Endothelial cell of umbilical vein (primary cell): ENCODE measurements at regions of chr2 and their contacts with region 1.

Region 1: DNA sequence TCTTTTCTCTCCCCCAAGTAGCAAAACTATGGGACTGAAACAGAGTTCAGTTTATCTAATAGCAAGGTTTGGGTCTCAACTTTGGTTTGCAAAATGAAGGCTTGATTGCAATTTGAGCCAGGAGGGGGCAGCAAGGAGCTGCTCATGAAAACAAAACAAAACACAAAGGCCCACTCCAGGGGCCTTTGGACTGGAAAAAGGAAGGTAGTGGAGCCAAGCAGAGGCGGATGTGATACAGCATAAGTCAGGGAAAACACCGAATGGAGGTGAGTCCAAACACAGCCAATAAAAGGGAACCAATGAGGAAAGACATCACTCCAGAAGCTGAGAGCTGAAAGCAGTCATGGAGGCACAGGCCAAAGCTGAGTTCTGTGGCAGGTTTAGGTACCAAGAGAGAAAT is 799.7 kb upstream of the ACVR2A start:
- DNase-seq: peak; percentile 47
- H3K4me3 ChIP-seq: no peak overlapping the region
- H3K27ac ChIP-seq: no peak overlapping the region
- H3K4me1 ChIP-seq: no peaks in the 10 kb centered on the region
- H3K27me3 ChIP-seq: no peaks in the 10 kb centered on the region
- CTCF ChIP-seq: peak; percentile 62 to 69
- POLR2A ChIP-seq: no peak

Region 2: DNA sequence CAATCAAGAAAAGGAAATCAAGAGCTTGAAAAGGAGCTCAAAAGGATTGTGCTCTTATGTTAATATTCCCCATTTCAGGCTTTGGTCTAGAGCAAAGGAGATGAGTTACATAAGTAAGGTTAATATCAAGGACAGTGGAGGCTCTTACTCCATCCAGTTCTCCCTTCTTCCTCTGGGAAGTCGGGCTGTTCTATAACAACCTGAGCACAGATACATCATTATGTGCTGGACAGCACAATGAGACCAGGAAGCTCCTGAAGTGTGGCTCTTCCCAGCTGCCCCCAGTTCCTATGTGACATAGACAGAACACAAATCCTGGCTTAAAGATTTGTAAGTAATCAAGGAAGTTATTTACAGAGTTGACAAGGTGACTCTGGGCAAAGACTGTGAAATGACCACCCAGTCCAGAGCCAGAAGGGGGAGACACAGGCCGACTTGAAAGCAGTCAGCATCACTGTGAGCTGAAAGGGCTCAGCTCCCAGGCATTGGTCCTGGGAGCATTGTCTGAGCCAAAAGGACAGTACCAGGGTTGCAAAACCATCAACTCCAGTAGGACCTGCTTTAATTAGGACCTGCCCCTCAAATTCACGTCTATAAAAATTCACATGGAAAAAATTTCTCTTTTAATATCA is 117.9 kb before region 1 on chr2:
- CTCF ChIA-PET with region 1: interaction called, 17 read pairs
- POLR2A ChIA-PET with region 1: no interaction called
- dilution Hi-C with region 1: no loop called
- intact Hi-C with region 1: loop called (anchors 2 kb)
- DNase-seq: peak; percentile 59
- H3K4me3 ChIP-seq: no peak overlapping the region
- H3K27ac ChIP-seq: no peak overlapping the region
- H3K4me1 ChIP-seq: no peaks in the 10 kb centered on the region
- H3K27me3 ChIP-seq: no peaks in the 10 kb centered on the region
- CTCF ChIP-seq: peak; percentile 32 to 62
- POLR2A ChIP-seq: no peak

Region 3: GRCh38 chr2:147030966-147031720 is 14.0 kb before region 1 on chr2:
- CTCF ChIA-PET with region 1: interaction called, 18 read pairs
- POLR2A ChIA-PET with region 1: no interaction called
- dilution Hi-C with region 1: no loop called
- intact Hi-C with region 1: no loop called
- DNase-seq: peak; percentile 48
- H3K4me3 ChIP-seq: no peak overlapping the region
- H3K27ac ChIP-seq: no peak overlapping the region
- H3K4me1 ChIP-seq: peaks cover 9% of the 10 kb centered on the region
- H3K27me3 ChIP-seq: no peaks in the 10 kb centered on the region
- CTCF ChIP-seq: no peak
- POLR2A ChIP-seq: no peak

Region 4: DNA sequence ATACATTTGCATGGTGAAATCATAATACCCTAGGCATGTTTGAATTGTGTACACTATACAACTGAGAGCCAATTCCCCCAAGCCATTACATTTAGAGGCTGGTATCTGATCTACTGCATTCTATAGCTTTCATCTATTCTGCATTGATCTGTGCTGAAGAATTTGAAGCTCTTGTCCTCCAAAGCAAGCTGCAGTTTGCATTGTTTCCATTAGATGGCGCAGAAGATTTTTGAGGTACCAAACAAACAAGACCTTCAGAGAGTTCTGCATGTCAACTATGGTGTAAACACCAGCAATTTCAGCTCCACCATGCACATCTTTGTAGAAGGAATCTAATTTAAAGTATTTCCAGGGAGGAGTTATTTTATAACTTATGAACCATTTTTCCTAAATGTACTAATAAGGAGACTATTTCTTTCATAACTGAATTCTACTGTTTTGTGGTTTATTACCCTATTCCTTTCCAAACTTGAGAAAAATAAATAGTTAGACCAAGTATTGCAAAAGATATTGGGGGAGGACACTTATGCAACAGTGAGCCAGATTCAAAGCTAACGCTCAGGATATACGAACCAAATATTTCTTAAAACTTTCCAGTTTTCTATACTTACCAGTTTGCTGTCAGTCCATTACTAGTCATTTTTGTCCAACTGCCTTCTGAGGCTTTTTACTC is 37.9 kb after region 1 on chr2:
- CTCF ChIA-PET with region 1: interaction called, 15 read pairs
- POLR2A ChIA-PET with region 1: no interaction called
- dilution Hi-C with region 1: no loop called
- intact Hi-C with region 1: no loop called
- DNase-seq: peak; percentile 73
- H3K4me3 ChIP-seq: no peak overlapping the region
- H3K27ac ChIP-seq: no peak overlapping the region
- H3K4me1 ChIP-seq: no peaks in the 10 kb centered on the region
- H3K27me3 ChIP-seq: no peaks in the 10 kb centered on the region
- CTCF ChIP-seq: peak; percentile 69
- POLR2A ChIP-seq: no peak

Region 5: GRCh38 chr2:147331790-147332419 is 286.8 kb after region 1 on chr2:
- CTCF ChIA-PET with region 1: no interaction called
- POLR2A ChIA-PET with region 1: no interaction called
- dilution Hi-C with region 1: no loop called
- intact Hi-C with region 1: no loop called
- DNase-seq: no peak
- H3K4me3 ChIP-seq: no peak overlapping the region
- H3K27ac ChIP-seq: no peak overlapping the region
- H3K4me1 ChIP-seq: no peaks in the 10 kb centered on the region
- H3K27me3 ChIP-seq: no peaks in the 10 kb centered on the region
- CTCF ChIP-seq: no peak
- POLR2A ChIP-seq: no peak